ENCODE measurements at regions of chr19 and their contacts with region 1.

Region 1: GRCh38 chr19:45485305-45486077 is 11.4 kb downstream of the RTN2 start:
- DNase-seq: peak; percentile 96
- ATAC-seq: peak; percentile 99
- H3K4me3 Mint-ChIP-seq: peak overlapping the region; percentile 91
- H3K27ac Mint-ChIP-seq: peak overlapping the region; percentile 74
- H3K4me1 Mint-ChIP-seq: peaks cover 8% of the 10 kb centered on the region
- H3K27me3 Mint-ChIP-seq: peaks cover 3% of the 10 kb centered on the region
- CTCF ChIP-seq: peak; percentile 84

Region 2: GRCh38 chr19:45340232-45340898 is 145.1 kb before region 1 on chr19 and contains the start of gene KLC3:
- CTCF ChIA-PET with region 1: no interaction called
- POLR2A ChIA-PET with region 1: no interaction called
- intact Hi-C with region 1: no loop called
- DNase-seq: peak; percentile 44
- ATAC-seq: peak; percentile 60
- H3K4me3 Mint-ChIP-seq: peak within 1 kb of the TSS; percentile 53
- H3K27ac Mint-ChIP-seq: no peak within 1 kb of the TSS
- H3K4me1 Mint-ChIP-seq: peaks cover 7% of the 10 kb centered on the region
- H3K27me3 Mint-ChIP-seq: peaks cover 17% of the 10 kb centered on the region
- CTCF ChIP-seq: no peak
- total RNA-seq, gene KLC3: not detected in 2 replicates

Region 3: GRCh38 chr19:45558399-45558878 is 72.9 kb after region 1 on chr19:
- CTCF ChIA-PET with region 1: interaction called, 13 read pairs
- POLR2A ChIA-PET with region 1: interaction called, 6 read pairs
- intact Hi-C with region 1: loop called (anchors 2 kb)
- DNase-seq: peak; percentile 26
- ATAC-seq: peak; percentile 99
- H3K4me3 Mint-ChIP-seq: no peak overlapping the region
- H3K27ac Mint-ChIP-seq: no peak overlapping the region
- H3K4me1 Mint-ChIP-seq: peaks cover 25% of the 10 kb centered on the region
- H3K27me3 Mint-ChIP-seq: no peaks in the 10 kb centered on the region
- CTCF ChIP-seq: no peak

Region 4: GRCh38 chr19:45739498-45740439 is 254.3 kb after region 1 on chr19:
- CTCF ChIA-PET with region 1: no interaction called
- POLR2A ChIA-PET with region 1: no interaction called
- intact Hi-C with region 1: no loop called
- DNase-seq: no peak
- ATAC-seq: no peak
- H3K4me3 Mint-ChIP-seq: no peak overlapping the region
- H3K27ac Mint-ChIP-seq: no peak overlapping the region
- H3K4me1 Mint-ChIP-seq: no peaks in the 10 kb centered on the region
- H3K27me3 Mint-ChIP-seq: peaks cover 14% of the 10 kb centered on the region
- CTCF ChIP-seq: no peak

Measured in activated B cell treated with CpG ODN at 0.5 μM for 24 hours (primary cell).